ENCODE measurements at regions of chrX and their contacts with region 1.

Region 1: GRCh38 chrX:135565401-135565800 is 44.9 kb downstream of the INTS6L start:
- DNase-seq: no peak
- H3K4me3 Mint-ChIP-seq: no peak overlapping the region
- H3K27ac Mint-ChIP-seq: no peak overlapping the region
- H3K4me1 Mint-ChIP-seq: no peaks in the 10 kb centered on the region
- H3K27me3 Mint-ChIP-seq: no peaks in the 10 kb centered on the region

Region 2: GRCh38 chrX:135543924-135544323 is 21.5 kb before region 1 on chrX:
- CTCF ChIA-PET with region 1: interaction called, 10 read pairs
- DNase-seq: peak; percentile 33
- H3K4me3 Mint-ChIP-seq: no peak overlapping the region
- H3K27ac Mint-ChIP-seq: peak overlapping the region; percentile 25
- H3K4me1 Mint-ChIP-seq: peaks cover 27% of the 10 kb centered on the region
- H3K27me3 Mint-ChIP-seq: no peaks in the 10 kb centered on the region

Region 3: GRCh38 chrX:135632353-135632752 is 67.0 kb after region 1 on chrX:
- CTCF ChIA-PET with region 1: no interaction called
- DNase-seq: no peak
- H3K4me3 Mint-ChIP-seq: no peak overlapping the region
- H3K27ac Mint-ChIP-seq: no peak overlapping the region
- H3K4me1 Mint-ChIP-seq: no peaks in the 10 kb centered on the region
- H3K27me3 Mint-ChIP-seq: peaks cover 4% of the 10 kb centered on the region

Measured in activated naive CD4-positive, alpha-beta T cell treated with anti-CD3 and anti-CD28 coated beads, Interleukin-2, amount 10 ng/mL, durations not matched to agents 7 days and 5 days (primary cell).